ENCODE measurements at regions of chr13 and their contacts with region 1.

Region 1: GRCh38 chr13:77918391-77919245 is at the start of gene EDNRB:
- DNase-seq: peak; percentile 17
- ATAC-seq: peak; percentile 79
- H3K4me3 ChIP-seq: peak within 1 kb of the TSS; percentile 58
- H3K27ac ChIP-seq: peak within 1 kb of the TSS; percentile 28
- H3K4me1 ChIP-seq: no peaks in the 10 kb centered on the region; the same call in 1 of the 2 replicates
- H3K27me3 ChIP-seq: no peaks in the 10 kb centered on the region; the same call in 1 of the 2 replicates
- CTCF ChIP-seq: no peak
- POLR2A ChIP-seq: no peak
- RAD21 ChIP-seq: no peak
- total RNA-seq, gene EDNRB: under 0.01 and 0.28 TPM in 2 replicates

Region 2: DNA sequence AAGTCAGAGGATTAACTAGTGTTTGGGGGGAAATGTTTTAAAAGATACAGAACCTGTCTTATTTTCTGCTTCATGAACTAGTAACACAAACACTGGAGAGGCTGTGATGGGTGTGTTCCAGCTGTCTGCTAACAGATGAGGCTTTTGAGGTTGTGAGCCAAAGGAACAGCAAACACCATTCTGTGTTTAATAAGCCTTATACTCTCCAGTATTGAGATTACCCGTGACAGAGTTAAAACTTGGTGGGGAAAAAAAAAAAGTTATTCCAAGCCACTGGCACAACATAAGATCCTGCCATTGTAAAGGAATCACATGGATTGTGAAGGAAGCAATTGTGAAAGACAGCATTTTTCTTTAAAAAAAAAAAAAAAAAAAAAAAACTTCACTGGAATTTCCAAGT is 1080.8 kb before region 1 on chr13:
- CTCF ChIA-PET with region 1: no interaction called
- POLR2A ChIA-PET with region 1: interaction called, 15 read pairs
- dilution Hi-C with region 1: no loop called
- in situ Hi-C with region 1: no loop called
- intact Hi-C with region 1: no loop called
- DNase-seq: peak; percentile 32
- ATAC-seq: peak; percentile 61
- H3K4me3 ChIP-seq: no peak overlapping the region
- H3K27ac ChIP-seq: no peak overlapping the region
- H3K4me1 ChIP-seq: peaks cover 10% of the 10 kb centered on the region
- H3K27me3 ChIP-seq: no peaks in the 10 kb centered on the region
- CTCF ChIP-seq: no peak
- POLR2A ChIP-seq: no peak
- RAD21 ChIP-seq: no peak

Region 3: GRCh38 chr13:77789376-77789775 is 129.2 kb before region 1 on chr13:
- CTCF ChIA-PET with region 1: no interaction called
- POLR2A ChIA-PET with region 1: no interaction called
- dilution Hi-C with region 1: no loop called
- in situ Hi-C with region 1: no loop called
- intact Hi-C with region 1: loop called (anchors 5 kb)
- DNase-seq: no peak
- ATAC-seq: no peak
- H3K4me3 ChIP-seq: no peak overlapping the region
- H3K27ac ChIP-seq: no peak overlapping the region
- H3K4me1 ChIP-seq: peaks cover 7% of the 10 kb centered on the region; the same call in 1 of the 2 replicates
- H3K27me3 ChIP-seq: no peaks in the 10 kb centered on the region
- CTCF ChIP-seq: no peak
- POLR2A ChIP-seq: no peak
- RAD21 ChIP-seq: no peak

Region 4: GRCh38 chr13:77810430-77810829 is 108.2 kb before region 1 on chr13:
- CTCF ChIA-PET with region 1: interaction called, 7 read pairs
- POLR2A ChIA-PET with region 1: no interaction called
- dilution Hi-C with region 1: no loop called
- in situ Hi-C with region 1: no loop called
- intact Hi-C with region 1: loop called (anchors 2 kb)
- DNase-seq: peak; percentile 34
- ATAC-seq: peak; percentile 85
- H3K4me3 ChIP-seq: no peak overlapping the region
- H3K27ac ChIP-seq: no peak overlapping the region
- H3K4me1 ChIP-seq: no peaks in the 10 kb centered on the region
- H3K27me3 ChIP-seq: no peaks in the 10 kb centered on the region; the same call in 1 of the 2 replicates
- CTCF ChIP-seq: peak; percentile 39
- POLR2A ChIP-seq: no peak
- RAD21 ChIP-seq: no peak

Region 5: DNA sequence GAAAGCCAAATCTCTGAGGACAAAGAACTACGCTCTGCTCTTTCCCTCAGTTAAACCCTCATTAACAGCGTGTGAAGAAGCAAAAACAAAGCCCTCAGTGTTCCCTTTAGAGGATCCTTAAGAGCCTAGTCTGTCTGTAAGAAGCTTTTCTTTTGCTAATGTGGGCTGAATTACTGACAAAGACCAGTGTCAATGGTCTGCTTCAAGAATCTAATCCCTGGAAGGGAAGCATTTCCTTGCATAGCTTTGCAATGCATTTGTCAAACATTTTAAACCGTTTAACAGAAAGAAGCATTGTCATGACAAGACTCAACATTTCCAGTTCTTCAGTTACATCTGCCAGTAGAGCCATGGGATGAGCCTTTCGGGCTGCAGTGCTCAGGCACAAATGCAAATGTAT is 64.9 kb before region 1 on chr13:
- CTCF ChIA-PET with region 1: no interaction called
- POLR2A ChIA-PET with region 1: interaction called, 16 read pairs
- dilution Hi-C with region 1: no loop called
- in situ Hi-C with region 1: no loop called
- intact Hi-C with region 1: no loop called
- DNase-seq: no peak
- ATAC-seq: no peak
- H3K4me3 ChIP-seq: no peak overlapping the region
- H3K27ac ChIP-seq: no peak overlapping the region
- H3K4me1 ChIP-seq: peaks cover 3% of the 10 kb centered on the region
- H3K27me3 ChIP-seq: no peaks in the 10 kb centered on the region
- CTCF ChIP-seq: no peak
- POLR2A ChIP-seq: no peak
- RAD21 ChIP-seq: no peak

Region 6: DNA sequence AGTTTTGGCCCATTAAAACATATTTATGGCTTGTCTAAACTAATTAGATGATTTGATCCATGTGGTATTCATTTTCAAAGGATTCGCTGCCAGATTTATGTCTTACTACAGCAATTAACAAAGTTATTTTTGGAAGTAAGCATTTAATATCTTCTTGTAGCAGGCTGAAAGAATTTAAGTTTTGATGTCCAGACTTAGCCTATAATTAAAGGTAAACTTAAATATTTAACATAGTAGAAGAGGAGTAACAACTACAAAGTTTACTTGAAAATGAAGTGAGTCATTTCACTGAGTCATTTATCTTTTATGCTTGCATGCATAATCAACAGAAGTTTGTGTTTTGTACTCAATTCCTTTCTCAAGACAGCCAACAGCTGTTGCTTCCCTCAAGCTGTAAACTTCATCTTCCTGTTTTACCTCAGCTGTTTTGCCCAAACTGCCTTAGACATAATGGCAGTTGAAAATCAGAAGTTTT is 58.1 kb before region 1 on chr13:
- CTCF ChIA-PET with region 1: no interaction called
- POLR2A ChIA-PET with region 1: no interaction called
- dilution Hi-C with region 1: no loop called
- in situ Hi-C with region 1: no loop called
- intact Hi-C with region 1: loop called (anchors 5 kb)
- DNase-seq: peak; percentile 93
- ATAC-seq: peak; percentile 75
- H3K4me3 ChIP-seq: no peak overlapping the region
- H3K27ac ChIP-seq: no peak overlapping the region; the same call in 1 of the 2 replicates
- H3K4me1 ChIP-seq: peaks cover 14% of the 10 kb centered on the region
- H3K27me3 ChIP-seq: no peaks in the 10 kb centered on the region
- CTCF ChIP-seq: no peak
- POLR2A ChIP-seq: no peak
- RAD21 ChIP-seq: no peak

Region 7: DNA sequence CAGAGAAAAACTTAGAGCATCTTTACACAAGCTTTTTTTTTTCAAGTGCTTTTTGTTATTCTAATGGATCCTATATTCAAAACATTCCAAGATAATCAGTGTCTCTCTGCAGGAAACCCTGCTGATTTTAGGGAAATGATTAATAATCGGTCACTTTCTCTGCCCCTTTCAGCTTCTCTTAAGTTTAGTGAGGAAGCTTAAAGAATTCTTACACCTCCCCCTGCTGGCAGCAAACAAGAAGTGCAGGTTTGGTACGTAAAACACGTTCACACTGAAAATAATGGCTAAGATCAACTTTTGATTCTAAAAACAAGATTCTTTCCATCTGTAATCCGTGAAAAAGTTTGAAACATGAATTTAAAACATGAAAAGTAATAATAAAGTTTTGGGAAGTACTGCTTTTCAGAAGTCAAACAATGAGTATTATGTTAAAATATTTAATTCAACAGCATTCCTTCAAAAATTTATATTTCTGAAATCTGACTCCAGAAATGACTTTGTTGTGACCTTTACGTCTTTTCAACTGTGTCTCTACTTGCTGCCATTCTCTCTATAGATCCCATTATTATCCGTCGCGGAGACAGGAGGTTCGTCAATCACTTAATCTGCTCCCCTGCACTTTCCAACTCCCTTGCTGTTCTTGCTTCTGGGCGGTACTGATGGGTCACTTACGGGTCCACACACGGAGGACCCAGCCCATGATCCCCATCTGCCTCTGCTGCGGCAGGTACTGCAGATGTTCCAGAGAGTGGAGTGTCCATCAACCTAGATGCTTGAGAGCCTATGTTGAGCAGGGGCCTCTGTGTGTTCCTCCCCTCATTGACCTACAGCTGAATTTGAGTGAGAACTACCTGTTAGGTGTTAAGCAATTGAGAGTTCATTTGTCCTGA is 203.1 kb after region 1 on chr13:
- CTCF ChIA-PET with region 1: no interaction called
- POLR2A ChIA-PET with region 1: no interaction called
- dilution Hi-C with region 1: no loop called
- in situ Hi-C with region 1: no loop called
- intact Hi-C with region 1: loop called (anchors 2 kb)
- DNase-seq: peak; percentile 70
- ATAC-seq: peak; percentile 85
- H3K4me3 ChIP-seq: no peak overlapping the region
- H3K27ac ChIP-seq: no peak overlapping the region
- H3K4me1 ChIP-seq: no peaks in the 10 kb centered on the region
- H3K27me3 ChIP-seq: peaks cover 13% of the 10 kb centered on the region
- CTCF ChIP-seq: peak; percentile 77
- POLR2A ChIP-seq: no peak
- RAD21 ChIP-seq: peak; percentile 73

Region 8: GRCh38 chr13:79740991-79741390 is 1822.4 kb after region 1 on chr13:
- CTCF ChIA-PET with region 1: no interaction called
- POLR2A ChIA-PET with region 1: no interaction called
- dilution Hi-C with region 1: no loop called
- in situ Hi-C with region 1: no loop called
- intact Hi-C with region 1: no loop called
- DNase-seq: peak; percentile 71
- ATAC-seq: peak; percentile 73
- H3K4me3 ChIP-seq: peak overlapping the region; percentile 13; the same call in 1 of the 2 replicates
- H3K27ac ChIP-seq: no peak overlapping the region
- H3K4me1 ChIP-seq: no peaks in the 10 kb centered on the region
- H3K27me3 ChIP-seq: no peaks in the 10 kb centered on the region
- CTCF ChIP-seq: no peak
- POLR2A ChIP-seq: no peak
- RAD21 ChIP-seq: no peak